ENCODE measurements at regions of chr4 and their contacts with region 1.

Region 1: DNA sequence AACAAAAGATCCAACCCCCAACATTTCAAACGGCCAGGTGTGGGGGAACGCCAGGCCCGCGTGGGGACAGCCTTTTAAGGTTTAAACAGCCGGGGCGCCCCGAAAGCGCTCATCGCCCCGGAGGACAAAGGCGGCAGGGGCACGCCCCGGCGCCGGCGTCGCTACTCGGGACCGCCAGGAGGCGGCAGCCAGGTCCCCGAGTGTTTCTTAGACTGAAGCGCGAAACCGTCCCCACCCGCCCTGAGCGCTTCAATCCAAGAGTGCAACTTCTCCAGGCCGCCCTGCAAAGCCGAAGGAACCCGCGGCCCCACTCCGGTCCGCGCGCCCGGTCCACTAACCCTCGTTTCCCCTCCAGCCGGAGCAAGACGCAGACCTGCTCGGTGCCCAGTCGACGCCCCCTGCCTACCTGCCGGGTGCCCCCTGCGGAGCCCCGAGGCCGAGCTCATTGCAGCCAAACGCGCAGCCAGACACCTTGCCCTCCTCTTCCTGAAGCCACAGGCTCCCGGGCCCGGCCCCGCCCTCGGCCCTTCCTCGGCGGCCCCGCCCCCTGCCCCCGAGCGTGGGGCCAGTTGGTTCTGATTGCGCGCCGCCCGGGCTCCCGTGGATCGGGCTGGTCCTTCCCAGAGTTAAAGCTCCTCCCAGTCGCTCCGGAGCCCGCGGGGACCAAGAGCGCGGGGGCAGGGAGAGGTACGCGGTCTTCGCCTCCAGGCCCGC is at the start of gene CASP6:
- DNase-seq: peak; percentile 66
- ATAC-seq: peak; percentile 83
- H3K4me3 Mint-ChIP-seq: peak within 1 kb of the TSS; percentile 93
- H3K27ac Mint-ChIP-seq: peak within 1 kb of the TSS; percentile 76
- H3K4me1 Mint-ChIP-seq: peaks cover 20% of the 10 kb centered on the region
- H3K27me3 Mint-ChIP-seq: no peaks in the 10 kb centered on the region
- CTCF ChIP-seq: no peak
- total RNA-seq, gene CASP6: 5.6 and 7.0 TPM in 2 replicates

Region 2: DNA sequence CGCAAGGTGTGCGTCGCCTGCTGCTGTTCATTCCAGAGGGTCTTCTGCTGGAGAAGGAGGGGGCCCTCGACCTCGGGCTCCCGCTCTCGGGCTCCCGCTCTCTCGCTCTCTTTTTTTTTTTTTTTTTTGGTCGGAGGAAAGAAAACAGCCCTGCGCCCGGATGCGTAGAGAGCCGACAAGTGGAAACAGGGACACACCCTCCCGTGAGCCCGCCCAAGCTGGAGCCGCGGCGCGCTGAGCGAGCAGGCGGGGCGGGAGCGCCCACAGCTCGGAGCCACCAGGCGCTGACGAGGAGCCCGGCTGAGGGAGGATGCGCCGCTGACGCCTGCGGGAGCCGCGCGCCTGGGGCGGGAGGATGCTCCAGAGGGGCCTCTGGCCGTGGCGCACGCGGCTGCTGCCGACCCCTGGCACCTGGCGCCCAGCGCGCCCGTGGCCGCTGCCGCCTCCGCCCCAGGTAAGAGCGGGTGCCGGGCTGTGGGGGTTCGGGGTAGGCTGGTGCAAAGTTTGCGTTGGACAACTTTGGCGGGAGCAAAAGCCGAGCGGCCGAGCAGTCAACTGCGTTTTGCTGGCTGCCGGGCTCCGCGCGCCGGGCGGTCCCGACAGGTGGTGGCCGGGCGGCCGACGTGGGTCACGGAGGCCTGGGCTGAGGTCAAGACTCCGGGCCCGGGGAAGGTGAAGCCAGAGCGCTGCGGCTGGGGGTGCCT is 143.0 kb before region 1 on chr4 and contains the start of gene MCUB:
- CTCF ChIA-PET with region 1: no interaction called
- POLR2A ChIA-PET with region 1: interaction called, 17 read pairs
- intact Hi-C with region 1: loop called (anchors 1 kb)
- DNase-seq: peak; percentile 75
- ATAC-seq: peak; percentile 84
- H3K4me3 Mint-ChIP-seq: peak within 1 kb of the TSS; percentile 93
- H3K27ac Mint-ChIP-seq: peak within 1 kb of the TSS; percentile 97
- H3K4me1 Mint-ChIP-seq: peaks cover 49% of the 10 kb centered on the region
- H3K27me3 Mint-ChIP-seq: no peaks in the 10 kb centered on the region
- CTCF ChIP-seq: no peak
- total RNA-seq, gene MCUB: 28.9 and 34.4 TPM in 2 replicates

Region 3: DNA sequence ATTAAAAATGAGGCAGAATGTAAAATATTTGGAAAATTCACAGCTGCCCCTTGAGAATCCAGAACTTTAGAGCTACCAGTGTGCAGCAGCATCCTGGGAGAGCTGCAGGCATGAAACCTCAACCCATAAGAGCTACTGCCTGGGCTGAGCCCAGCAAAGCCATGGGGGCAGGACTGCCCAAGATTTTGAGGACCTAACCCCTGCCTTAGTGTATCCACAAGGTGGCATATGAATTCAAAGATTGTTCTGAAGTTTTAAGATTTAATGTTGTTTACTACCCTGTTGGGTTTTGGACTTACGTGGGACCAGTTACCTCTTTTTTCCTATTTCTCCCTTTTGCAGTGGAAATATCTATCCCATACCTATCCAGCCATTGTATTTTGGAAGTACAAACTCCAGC is 26.2 kb before region 1 on chr4:
- CTCF ChIA-PET with region 1: no interaction called
- POLR2A ChIA-PET with region 1: no interaction called
- intact Hi-C with region 1: no loop called
- DNase-seq: no peak
- ATAC-seq: no peak
- H3K4me3 Mint-ChIP-seq: no peak overlapping the region
- H3K27ac Mint-ChIP-seq: no peak overlapping the region
- H3K4me1 Mint-ChIP-seq: peaks cover 2% of the 10 kb centered on the region
- H3K27me3 Mint-ChIP-seq: no peaks in the 10 kb centered on the region
- CTCF ChIP-seq: no peak

Region 4: DNA sequence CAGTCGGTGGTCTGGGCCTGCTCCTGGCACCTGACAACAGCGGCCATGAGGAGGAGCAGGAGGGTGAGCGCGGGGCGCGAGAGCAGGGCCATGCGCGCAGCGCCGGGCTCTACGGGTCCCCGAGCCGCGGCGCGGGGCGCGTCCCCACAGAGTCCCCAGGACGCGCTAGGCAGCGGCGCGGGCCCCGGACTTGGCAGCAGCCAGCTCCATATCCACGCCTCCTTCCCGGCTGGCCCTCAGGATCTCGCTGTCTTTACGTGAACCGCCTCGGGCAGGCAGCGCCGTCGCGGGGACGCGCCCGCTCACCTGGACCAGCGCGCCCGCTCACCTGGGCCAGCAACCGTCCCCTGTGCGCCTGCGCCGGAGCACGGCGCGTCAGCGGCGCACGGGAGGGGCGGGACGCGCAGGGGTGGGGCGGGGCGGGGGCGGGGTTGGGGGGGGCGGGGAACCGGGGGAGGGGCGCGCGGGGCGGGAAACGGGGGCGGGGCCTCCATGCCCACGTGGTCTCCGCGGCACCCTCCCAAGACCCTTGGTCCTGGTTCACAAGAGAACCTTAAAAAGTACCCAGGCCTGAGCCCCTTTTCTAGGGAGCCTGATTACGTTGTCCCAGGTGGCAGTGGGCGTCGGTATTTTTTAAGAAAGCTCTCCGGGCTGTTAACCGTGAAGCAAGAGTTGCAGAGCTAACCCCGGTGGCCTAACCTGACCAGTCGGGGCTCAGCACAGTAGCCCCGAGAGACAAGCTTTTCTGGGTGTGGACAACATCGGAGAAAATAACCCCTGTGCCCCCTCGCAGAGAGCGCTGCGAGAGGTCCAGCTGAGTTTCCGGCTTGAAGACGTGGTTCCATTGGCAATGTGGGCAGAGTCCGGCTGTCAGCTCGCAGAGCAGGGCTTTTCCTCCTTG is 26.9 kb after region 1 on chr4 and contains the start of gene PLA2G12A:
- CTCF ChIA-PET with region 1: interaction called, 5 read pairs
- POLR2A ChIA-PET with region 1: interaction called, 4 read pairs
- intact Hi-C with region 1: loop called (anchors 1 kb)
- DNase-seq: peak; percentile 77
- ATAC-seq: peak; percentile 90
- H3K4me3 Mint-ChIP-seq: peak within 1 kb of the TSS; percentile 90
- H3K27ac Mint-ChIP-seq: peak within 1 kb of the TSS; percentile 79
- H3K4me1 Mint-ChIP-seq: peaks cover 12% of the 10 kb centered on the region
- H3K27me3 Mint-ChIP-seq: no peaks in the 10 kb centered on the region
- CTCF ChIP-seq: no peak
- total RNA-seq, gene PLA2G12A: 6.7 and 9.6 TPM in 2 replicates

Region 5: GRCh38 chr4:109850601-109851000 is 147.5 kb after region 1 on chr4:
- CTCF ChIA-PET with region 1: no interaction called
- POLR2A ChIA-PET with region 1: no interaction called
- intact Hi-C with region 1: no loop called
- DNase-seq: no peak
- ATAC-seq: no peak
- H3K4me3 Mint-ChIP-seq: no peak overlapping the region
- H3K27ac Mint-ChIP-seq: no peak overlapping the region
- H3K4me1 Mint-ChIP-seq: no peaks in the 10 kb centered on the region
- H3K27me3 Mint-ChIP-seq: no peaks in the 10 kb centered on the region
- CTCF ChIP-seq: no peak

Region 6: GRCh38 chr4:109977854-109978501 is 274.9 kb after region 1 on chr4:
- CTCF ChIA-PET with region 1: no interaction called
- POLR2A ChIA-PET with region 1: no interaction called
- intact Hi-C with region 1: loop called (anchors 2 kb)
- DNase-seq: no peak
- ATAC-seq: no peak
- H3K4me3 Mint-ChIP-seq: no peak overlapping the region
- H3K27ac Mint-ChIP-seq: no peak overlapping the region
- H3K4me1 Mint-ChIP-seq: no peaks in the 10 kb centered on the region
- H3K27me3 Mint-ChIP-seq: peaks cover 18% of the 10 kb centered on the region
- CTCF ChIP-seq: no peak